ENCODE measurements at regions of chr17 and their contacts with region 1.

Region 1: GRCh38 chr17:42019509-42020404 is at the start of gene NKIRAS2:
- H3K4me3 ChIP-seq: peak within 1 kb of the TSS; percentile 93
- H3K27ac ChIP-seq: peak within 1 kb of the TSS; percentile 69; the same call in 1 of the 2 replicates
- H3K4me1 ChIP-seq: peaks cover 3% of the 10 kb centered on the region; the same call in 1 of the 2 replicates
- CTCF ChIP-seq: peak; percentile 94

Region 2: GRCh38 chr17:41966463-41967140 is 53.2 kb before region 1 on chr17 and contains the start of gene CNP:
- CTCF ChIA-PET with region 1: interaction called, 142 read pairs
- POLR2A ChIA-PET with region 1: interaction called, 48 read pairs
- H3K4me3 ChIP-seq: peak within 1 kb of the TSS; percentile 76
- H3K27ac ChIP-seq: peak within 1 kb of the TSS; percentile 89
- H3K4me1 ChIP-seq: 0 out of 2 replicates have a peak, but pooled peaks cover 4% of the 10 kb centered on the region
- CTCF ChIP-seq: no peak

Region 3: GRCh38 chr17:42002792-42003301 is 16.9 kb before region 1 on chr17:
- CTCF ChIA-PET with region 1: interaction called, 21 read pairs
- POLR2A ChIA-PET with region 1: interaction called, 3 read pairs
- H3K4me3 ChIP-seq: no peak overlapping the region
- H3K27ac ChIP-seq: no peak overlapping the region
- H3K4me1 ChIP-seq: 0 out of 2 replicates have a peak, but pooled peaks cover 2% of the 10 kb centered on the region
- CTCF ChIP-seq: no peak

Region 4: DNA sequence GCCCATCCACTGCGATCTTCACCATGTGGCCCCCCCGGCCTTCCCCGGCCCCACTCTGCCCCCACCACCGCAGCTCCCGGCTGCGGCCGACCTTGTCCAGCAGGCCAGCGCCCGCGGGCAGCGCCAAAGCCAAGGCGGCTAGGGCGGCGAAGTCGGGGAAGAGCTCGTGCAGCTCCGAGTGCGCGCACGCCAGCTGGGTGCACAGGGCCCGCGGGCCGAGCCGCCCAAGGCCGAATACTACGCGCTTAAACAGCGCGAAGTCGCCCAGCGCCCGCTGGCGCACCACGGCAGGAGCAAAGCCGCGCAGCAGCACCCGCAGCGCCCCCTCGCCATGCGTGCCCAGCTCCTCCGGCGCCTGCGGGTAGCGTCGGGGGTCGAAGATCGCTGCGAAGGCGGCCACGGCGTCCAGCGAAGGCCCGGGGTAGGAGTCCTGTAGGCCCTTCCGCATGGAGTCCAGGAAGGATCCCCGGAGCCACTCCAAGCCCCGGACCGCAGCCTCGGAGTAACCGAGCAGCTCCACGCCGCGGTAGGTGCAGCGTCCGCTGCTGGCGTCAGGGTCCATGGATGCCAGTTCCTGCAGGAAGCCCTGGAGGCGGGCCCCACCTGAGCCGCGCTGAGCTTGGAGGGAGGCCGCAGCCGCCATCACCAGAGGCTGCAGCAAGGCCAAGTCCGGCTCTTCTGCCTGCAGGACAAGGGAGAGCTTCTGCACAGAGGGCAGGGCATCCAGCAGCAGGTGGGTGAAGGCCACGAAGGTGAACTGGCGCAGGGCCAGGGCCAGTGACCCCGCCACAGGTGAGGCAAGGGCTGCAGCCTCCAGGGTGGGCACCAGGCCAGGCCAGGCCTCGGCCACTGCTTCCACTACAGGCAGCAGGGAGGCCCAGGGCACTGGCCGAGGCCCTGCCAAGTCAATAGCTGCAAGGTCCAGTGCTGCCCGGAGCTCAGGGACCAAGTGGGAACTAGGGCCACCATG is 20.3 kb after region 1 on chr17:
- CTCF ChIA-PET with region 1: interaction called, 19 read pairs
- POLR2A ChIA-PET with region 1: interaction called, 5 read pairs
- H3K4me3 ChIP-seq: no peak overlapping the region
- H3K27ac ChIP-seq: no peak overlapping the region
- H3K4me1 ChIP-seq: no peaks in the 10 kb centered on the region
- CTCF ChIP-seq: no peak

Region 5: DNA sequence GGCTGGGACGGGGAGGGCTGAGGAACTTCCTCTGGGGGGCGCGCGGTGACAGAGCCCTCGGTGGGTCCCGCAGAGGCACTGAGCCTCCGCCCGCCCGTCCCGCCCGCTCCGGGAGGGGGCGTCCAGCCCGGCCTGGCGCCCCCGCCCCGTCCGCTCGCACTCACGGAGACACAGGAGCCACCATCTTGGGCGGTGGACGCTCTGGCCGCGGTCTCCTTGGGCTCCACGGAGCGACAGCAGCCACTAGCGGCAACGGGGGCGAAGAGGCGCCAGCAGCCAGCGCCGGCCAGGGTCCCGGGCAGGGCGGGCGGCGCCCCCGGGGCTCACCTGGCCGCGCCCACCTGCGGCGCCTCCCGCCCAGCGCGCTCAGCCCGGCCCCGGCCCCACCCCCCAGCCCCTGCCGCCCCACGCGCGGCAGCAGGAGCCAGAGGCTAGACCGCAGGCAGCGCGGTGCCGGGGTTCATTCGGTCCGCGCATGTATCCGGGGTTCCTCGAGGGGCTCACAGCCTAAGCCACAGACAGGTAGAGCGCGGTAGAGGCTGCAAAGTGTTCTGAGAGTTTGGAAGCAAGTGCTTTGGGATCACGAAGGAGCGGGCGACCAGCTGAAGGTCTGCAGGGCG is 30.7 kb after region 1 on chr17 and contains the start of gene C17orf113:
- CTCF ChIA-PET with region 1: interaction called, 17 read pairs
- POLR2A ChIA-PET with region 1: interaction called, 4 read pairs
- H3K4me3 ChIP-seq: peak within 1 kb of the TSS; percentile 50
- H3K27ac ChIP-seq: peak within 1 kb of the TSS; percentile 38; the same call in 1 of the 2 replicates
- H3K4me1 ChIP-seq: no peaks in the 10 kb centered on the region; the same call in 1 of the 2 replicates
- CTCF ChIP-seq: peak; percentile 94

Region 6: GRCh38 chr17:42101513-42102319 is 82.0 kb after region 1 on chr17:
- CTCF ChIA-PET with region 1: interaction called, 260 read pairs
- POLR2A ChIA-PET with region 1: interaction called, 4 read pairs
- H3K4me3 ChIP-seq: no peak overlapping the region
- H3K27ac ChIP-seq: no peak overlapping the region
- H3K4me1 ChIP-seq: no peaks in the 10 kb centered on the region; the same call in 1 of the 2 replicates
- CTCF ChIP-seq: peak; percentile 69

Region 7: DNA sequence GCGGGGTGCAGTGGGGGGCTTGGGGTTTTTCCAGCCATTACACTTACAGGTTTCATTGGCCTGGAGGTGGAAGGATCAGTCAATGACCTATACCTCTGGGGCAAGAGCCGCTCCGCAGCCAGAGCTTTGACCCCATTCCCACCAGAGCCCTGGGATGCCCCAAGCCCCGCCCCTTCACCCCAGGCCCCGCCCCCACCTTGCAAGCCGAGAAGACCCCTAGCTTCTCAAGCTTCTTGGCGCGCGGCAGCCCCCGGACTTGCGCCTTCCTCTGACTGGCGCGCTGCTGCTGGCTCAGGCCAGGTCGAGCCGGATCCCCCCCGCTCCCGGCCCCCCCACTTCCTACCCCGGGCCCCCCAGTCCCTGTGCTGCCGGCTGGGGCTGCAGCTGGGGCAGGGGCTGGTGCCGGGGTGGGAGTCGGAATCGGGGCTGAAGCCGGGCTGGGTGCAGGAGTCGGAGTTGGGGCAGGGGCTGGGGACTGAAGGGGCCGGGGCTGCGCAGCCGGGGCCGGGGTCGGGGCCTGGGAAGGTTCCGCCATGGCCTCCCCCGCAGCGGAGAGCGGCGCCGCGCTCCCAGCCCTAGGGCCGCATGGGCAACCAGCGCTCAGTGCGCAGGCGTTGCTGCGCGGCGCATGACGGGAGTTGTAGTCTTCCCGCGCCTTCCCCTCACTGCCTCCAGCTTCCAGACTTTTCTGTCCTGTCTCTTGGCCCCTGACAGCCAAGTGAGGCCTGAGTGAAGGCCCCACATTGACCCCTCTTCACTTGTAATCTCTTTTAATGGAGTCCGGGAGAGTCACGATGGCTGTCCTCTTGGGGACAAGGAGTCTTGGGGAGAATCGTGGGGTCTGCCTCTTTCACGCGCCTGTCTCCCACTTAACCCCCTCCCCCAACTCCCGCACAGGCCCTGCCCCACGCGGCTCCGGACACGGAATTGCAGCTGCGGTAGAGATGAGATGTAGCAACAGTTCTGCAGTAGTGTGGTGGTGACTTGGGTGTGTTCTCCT is 101.3 kb after region 1 on chr17 and contains the start of gene KAT2A:
- CTCF ChIA-PET with region 1: interaction called, 260 read pairs
- POLR2A ChIA-PET with region 1: interaction called, 10 read pairs
- H3K4me3 ChIP-seq: peak within 1 kb of the TSS; percentile 56
- H3K27ac ChIP-seq: peak within 1 kb of the TSS; percentile 18; the same call in 1 of the 2 replicates
- H3K4me1 ChIP-seq: peaks cover 4% of the 10 kb centered on the region; the same call in 1 of the 2 replicates
- CTCF ChIP-seq: no peak

Region 8: DNA sequence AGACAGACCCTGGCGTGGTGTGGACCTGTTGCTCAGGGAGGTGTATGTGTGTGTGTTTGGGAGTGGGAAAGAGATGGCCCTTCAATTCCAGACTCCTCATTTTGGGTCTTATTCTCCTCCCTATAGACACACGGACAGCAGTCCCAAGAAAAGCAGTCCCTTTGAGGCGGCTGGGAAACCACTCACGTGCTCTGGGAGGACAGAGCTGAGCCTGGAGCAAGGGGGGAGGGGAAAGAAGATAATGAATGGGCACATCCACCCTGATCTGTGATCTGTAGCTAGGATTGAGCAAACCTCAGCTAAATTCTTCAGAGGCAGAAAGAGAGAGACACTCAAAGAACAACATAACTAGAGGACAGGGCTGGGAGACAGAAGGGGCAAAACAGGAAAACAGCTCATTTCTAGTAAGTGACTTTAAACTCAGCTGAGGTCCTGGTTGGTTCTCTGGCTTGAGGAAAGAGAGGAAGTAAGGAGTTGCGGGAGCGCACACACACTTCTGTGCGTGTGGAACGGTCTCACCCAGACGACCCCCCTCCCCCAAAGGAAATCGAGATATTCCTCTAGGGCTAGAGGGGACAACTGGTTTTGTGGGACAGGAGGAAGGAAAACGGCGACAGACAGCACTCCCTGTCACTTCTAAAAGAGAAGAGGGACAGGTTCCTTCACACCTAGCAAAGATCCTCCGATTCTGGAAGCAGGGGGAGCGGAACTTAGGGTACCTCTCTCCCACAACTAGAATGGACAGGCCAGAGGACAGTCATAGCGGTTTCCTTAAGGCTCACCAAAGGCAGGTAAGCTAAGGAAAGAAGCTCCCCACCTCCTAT is 134.4 kb after region 1 on chr17:
- CTCF ChIA-PET with region 1: no interaction called
- POLR2A ChIA-PET with region 1: no interaction called
- H3K4me3 ChIP-seq: peak overlapping the region; percentile 53
- H3K27ac ChIP-seq: peak overlapping the region; percentile 71
- H3K4me1 ChIP-seq: no peaks in the 10 kb centered on the region; the same call in 1 of the 2 replicates
- CTCF ChIP-seq: no peak

Region 9: DNA sequence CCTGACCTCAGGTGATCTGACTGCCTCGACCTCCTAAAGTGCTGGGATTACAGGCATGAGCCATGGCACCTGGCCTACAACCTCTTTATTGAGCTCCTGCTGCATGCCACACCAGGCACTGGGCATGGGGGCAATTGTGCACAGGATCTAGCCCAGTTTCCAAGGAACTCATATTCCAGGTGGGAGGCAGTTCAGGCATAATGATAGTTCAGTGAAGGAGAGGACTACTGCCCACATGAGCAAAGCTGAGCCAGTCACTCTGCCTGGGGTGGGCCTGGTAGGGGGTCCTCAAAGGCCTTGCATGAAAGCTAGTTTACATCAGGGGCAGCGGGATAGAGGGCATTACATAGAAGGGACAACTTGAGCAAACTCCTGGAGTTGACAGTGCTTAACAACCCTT is 168.1 kb after region 1 on chr17:
- CTCF ChIA-PET with region 1: no interaction called
- POLR2A ChIA-PET with region 1: no interaction called
- H3K4me3 ChIP-seq: no peak overlapping the region
- H3K27ac ChIP-seq: no peak overlapping the region
- H3K4me1 ChIP-seq: no peaks in the 10 kb centered on the region
- CTCF ChIP-seq: no peak